ENCODE measurements at regions of chr3 and their contacts with region 1.

Region 1: DNA sequence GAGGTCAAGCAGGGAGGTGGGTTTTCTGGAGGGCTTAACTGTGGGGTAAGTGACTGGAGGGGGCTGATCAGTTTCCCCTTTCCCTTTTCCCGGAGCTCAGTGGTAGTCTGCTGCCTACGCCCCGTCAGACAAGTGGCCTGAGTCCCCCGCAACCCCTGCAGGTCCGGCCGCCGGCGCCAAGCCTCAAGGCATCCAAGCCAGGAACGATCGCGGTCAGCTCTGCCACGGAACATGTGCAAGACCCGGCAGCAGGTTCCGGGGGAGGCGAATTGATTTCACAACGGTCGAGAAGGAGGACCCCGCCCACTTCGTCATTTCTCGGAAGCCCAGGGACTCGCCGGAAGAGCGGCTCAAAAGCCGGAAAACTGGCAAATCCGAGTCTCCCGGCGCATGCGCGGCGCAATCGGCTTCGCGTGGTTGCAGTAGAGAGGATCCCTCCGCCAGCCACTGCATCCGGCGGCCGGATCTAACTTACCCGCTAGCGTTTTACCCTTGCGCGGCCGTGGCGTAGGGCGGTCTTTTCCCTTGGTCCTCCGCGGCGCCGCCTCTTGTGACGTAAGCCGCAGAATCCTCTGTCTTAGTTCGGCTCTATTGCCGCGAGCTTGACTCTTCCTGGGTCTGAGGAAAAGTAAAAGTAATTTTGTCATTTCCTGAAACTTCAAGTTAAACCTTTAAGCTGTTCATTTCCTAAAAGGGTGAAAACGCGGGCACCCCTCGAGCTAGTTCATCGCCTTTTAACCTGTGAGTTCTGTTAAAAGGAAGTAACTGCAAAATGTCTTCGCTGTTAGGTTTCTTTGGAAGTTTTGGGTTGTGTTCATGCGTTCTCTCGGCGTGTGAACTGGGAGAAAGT is 14.9 kb upstream of the CCNL1 start:
- DNase-seq: peak; percentile 99
- H3K4me3 Mint-ChIP-seq: peak overlapping the region; percentile 97
- H3K27ac Mint-ChIP-seq: peak overlapping the region; percentile 96
- H3K4me1 Mint-ChIP-seq: peaks cover 38% of the 10 kb centered on the region
- H3K27me3 Mint-ChIP-seq: no peaks in the 10 kb centered on the region

Region 2: DNA sequence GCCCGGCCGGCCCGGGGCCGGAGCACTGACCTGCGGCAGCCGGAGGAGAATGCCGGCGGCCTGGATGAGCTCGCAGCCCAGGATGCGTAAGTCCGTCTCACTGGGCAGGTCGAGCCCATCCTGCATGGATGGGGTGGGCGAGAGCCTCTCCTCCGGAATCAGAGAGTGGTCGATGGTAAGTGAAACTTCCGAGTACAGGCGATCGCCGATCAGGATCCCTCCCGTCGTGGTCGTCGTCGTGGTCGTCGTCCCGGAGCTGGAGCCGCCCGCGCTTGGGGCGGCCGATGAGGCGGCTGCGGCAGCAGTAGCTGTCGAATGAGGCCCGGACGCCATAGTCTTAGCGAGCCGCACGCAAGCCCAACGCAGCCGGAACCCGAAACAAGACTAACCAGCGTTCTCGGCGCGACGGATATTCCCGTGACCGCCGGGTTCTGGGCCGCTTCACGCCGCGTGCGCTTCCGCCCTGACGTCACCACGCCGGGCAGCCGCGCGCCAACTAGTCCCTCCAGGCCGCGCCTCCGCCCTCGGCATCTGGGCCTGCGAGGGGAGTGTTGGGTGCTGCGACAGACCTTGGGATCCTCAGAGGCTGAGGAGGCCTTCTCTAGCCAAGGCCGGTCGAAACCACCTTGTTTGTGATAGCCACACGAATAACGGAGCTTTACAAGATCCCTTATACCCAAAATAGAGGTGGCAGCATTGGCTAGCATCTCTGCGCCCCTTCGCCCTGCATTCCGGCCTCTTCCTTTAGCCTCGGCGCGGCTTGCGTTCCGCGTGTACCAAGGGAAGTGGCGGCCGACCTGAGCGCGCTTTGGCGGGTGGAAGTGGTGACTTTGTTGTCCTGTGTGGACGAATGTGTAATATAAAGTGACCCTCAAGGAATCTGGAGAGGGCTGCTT is 14.9 kb before region 1 on chr3 and contains the start of gene CCNL1:
- intact Hi-C with region 1: loop called (anchors 1 kb)
- DNase-seq: peak; percentile 95
- H3K4me3 Mint-ChIP-seq: peak within 1 kb of the TSS; percentile 99
- H3K27ac Mint-ChIP-seq: peak within 1 kb of the TSS; percentile 98
- H3K4me1 Mint-ChIP-seq: peaks cover 52% of the 10 kb centered on the region
- H3K27me3 Mint-ChIP-seq: no peaks in the 10 kb centered on the region
- total RNA-seq, gene CCNL1: 160 and 167 TPM in 2 replicates

Region 3: GRCh38 chr3:157201648-157202278 is 26.9 kb after region 1 on chr3:
- intact Hi-C with region 1: loop called (anchors 2 kb)
- DNase-seq: no peak
- H3K4me3 Mint-ChIP-seq: no peak overlapping the region
- H3K27ac Mint-ChIP-seq: no peak overlapping the region
- H3K4me1 Mint-ChIP-seq: no peaks in the 10 kb centered on the region
- H3K27me3 Mint-ChIP-seq: peaks cover 5% of the 10 kb centered on the region

Region 4: DNA sequence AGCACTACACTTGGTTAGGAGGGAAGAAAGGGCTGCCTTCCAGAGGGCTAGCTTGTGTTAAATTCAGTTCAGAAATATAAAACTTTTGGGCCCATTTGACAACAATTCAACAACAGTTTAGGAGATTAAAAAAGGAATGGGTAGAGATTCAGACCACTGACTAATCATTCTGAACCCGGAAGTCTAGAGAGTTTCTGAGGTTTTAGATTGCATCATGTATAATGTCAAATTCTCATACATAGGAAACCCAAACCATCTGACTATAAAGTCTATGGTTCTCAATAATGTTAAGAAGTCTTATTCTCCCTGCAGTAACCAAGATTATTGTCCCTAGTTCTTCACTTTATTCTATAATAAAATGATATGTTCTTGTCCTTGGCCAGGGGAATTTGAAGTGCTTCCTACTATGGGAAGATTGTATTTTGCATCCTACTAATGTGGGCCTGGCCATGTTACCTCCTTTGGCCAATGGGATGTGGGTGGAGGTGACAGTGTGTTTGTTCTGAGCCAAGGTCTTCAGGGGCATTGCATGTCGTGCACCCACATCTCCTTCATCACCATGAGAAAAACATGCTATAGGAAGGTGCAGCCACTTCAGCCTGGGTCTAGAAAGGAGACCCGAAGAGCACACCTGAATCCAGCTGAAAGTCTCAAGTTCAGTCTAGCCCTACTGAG is 51.4 kb after region 1 on chr3:
- intact Hi-C with region 1: loop called (anchors 2 kb)
- DNase-seq: no peak
- H3K4me3 Mint-ChIP-seq: no peak overlapping the region
- H3K27ac Mint-ChIP-seq: no peak overlapping the region
- H3K4me1 Mint-ChIP-seq: peaks cover 17% of the 10 kb centered on the region
- H3K27me3 Mint-ChIP-seq: peaks cover 20% of the 10 kb centered on the region

Region 5: DNA sequence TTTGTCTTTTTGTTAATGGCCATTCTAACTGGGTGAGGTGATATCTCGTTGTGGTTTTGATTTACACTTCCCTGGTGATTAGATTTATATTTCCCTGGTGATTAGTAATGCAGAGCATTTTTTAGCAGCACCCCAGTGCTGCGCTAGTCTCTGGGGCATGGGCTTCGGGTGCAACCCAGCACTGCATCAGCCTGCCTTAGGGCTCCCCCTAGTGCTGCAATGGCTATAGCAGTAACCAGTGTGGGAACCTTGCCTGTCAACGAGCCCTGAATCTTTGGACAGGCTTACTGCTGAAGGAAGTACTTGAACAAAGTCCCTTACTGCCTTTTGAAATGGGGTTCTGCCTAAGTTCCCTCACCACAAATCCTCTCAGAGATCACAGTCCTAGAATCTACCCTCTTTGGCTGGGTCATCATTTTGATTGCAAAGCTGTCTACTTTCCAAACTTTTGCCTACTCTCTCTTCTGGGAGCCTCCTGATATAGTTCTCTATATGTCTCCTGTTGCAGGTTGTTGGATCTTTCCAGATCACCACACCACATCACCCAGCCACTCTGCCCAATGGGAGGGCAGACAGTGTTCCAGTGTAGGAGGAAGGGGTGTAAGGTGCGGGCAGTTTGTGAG is 64.3 kb after region 1 on chr3:
- intact Hi-C with region 1: loop called (anchors 1 kb)
- DNase-seq: peak; percentile 57
- H3K4me3 Mint-ChIP-seq: no peak overlapping the region
- H3K27ac Mint-ChIP-seq: no peak overlapping the region
- H3K4me1 Mint-ChIP-seq: peaks cover 2% of the 10 kb centered on the region
- H3K27me3 Mint-ChIP-seq: peaks cover 10% of the 10 kb centered on the region

Measured in activated T-helper 2 cell treated with anti-CD3 and anti-CD28 coated beads, Interferon-gamma antibody, Interleukin-2, Interleukin-4, amounts not matched to agents 10 μg/mL and 5 μg/mL and 100 μg/mL, durations not matched to agents 14 hours and 24 hours and 36 hours (primary cell).